Mammary epithelial cell (primary cell): ENCODE measurements at regions of chr7 and their contacts with region 1.

Region 1: GRCh38 chr7:100611974-100612729 is at the start of gene MOSPD3:
- DNase-seq: peak; percentile 98
- H3K4me3 ChIP-seq: peak within 1 kb of the TSS; percentile 67 to 84 (median 70)
- H3K27ac ChIP-seq: peak within 1 kb of the TSS; percentile 86
- H3K4me1 ChIP-seq: peaks cover 6% of the 10 kb centered on the region
- H3K27me3 ChIP-seq: no peaks in the 10 kb centered on the region
- CTCF ChIP-seq: no peak
- total RNA-seq, gene MOSPD3: 6.8 to 16.3 TPM

Region 2: GRCh38 chr7:100428967-100429636 is 183.1 kb before region 1 on chr7:
- CTCF ChIA-PET with region 1: no interaction called
- dilution Hi-C with region 1: loop called (anchors 10 kb)
- in situ Hi-C with region 1: no loop called
- intact Hi-C with region 1: no loop called
- DNase-seq: peak; percentile 99
- H3K4me3 ChIP-seq: peak overlapping the region; percentile 83 to 91 (median 84)
- H3K27ac ChIP-seq: peak overlapping the region; percentile 95
- H3K4me1 ChIP-seq: peaks cover 20% of the 10 kb centered on the region
- H3K27me3 ChIP-seq: no peaks in the 10 kb centered on the region
- CTCF ChIP-seq: no peak

Region 3: GRCh38 chr7:100586266-100587025 is 25.7 kb before region 1 on chr7 and contains the start of gene FBXO24:
- CTCF ChIA-PET with region 1: no interaction called
- dilution Hi-C with region 1: no loop called
- in situ Hi-C with region 1: no loop called
- intact Hi-C with region 1: loop called (anchors 1 kb)
- DNase-seq: peak; percentile 100
- H3K4me3 ChIP-seq: peak within 1 kb of the TSS; percentile 80 to 98 (median 88)
- H3K27ac ChIP-seq: peak within 1 kb of the TSS; percentile 74
- H3K4me1 ChIP-seq: peaks cover 20% of the 10 kb centered on the region
- H3K27me3 ChIP-seq: no peaks in the 10 kb centered on the region
- CTCF ChIP-seq: no peak
- total RNA-seq, gene FBXO24: 0.17 to 0.45 TPM

Region 4: GRCh38 chr7:100764841-100765240 is 152.7 kb after region 1 on chr7:
- CTCF ChIA-PET with region 1: no interaction called
- dilution Hi-C with region 1: loop called (anchors 5 kb)
- in situ Hi-C with region 1: no loop called
- intact Hi-C with region 1: no loop called
- DNase-seq: no peak
- H3K4me3 ChIP-seq: no peak overlapping the region
- H3K27ac ChIP-seq: no peak overlapping the region
- H3K4me1 ChIP-seq: no peaks in the 10 kb centered on the region
- H3K27me3 ChIP-seq: no peaks in the 10 kb centered on the region
- CTCF ChIP-seq: no peak